Transverse colon (tissue), 4 donors: ENCODE measurements at regions of chr7 and their contacts with region 1.

Region 1: DNA sequence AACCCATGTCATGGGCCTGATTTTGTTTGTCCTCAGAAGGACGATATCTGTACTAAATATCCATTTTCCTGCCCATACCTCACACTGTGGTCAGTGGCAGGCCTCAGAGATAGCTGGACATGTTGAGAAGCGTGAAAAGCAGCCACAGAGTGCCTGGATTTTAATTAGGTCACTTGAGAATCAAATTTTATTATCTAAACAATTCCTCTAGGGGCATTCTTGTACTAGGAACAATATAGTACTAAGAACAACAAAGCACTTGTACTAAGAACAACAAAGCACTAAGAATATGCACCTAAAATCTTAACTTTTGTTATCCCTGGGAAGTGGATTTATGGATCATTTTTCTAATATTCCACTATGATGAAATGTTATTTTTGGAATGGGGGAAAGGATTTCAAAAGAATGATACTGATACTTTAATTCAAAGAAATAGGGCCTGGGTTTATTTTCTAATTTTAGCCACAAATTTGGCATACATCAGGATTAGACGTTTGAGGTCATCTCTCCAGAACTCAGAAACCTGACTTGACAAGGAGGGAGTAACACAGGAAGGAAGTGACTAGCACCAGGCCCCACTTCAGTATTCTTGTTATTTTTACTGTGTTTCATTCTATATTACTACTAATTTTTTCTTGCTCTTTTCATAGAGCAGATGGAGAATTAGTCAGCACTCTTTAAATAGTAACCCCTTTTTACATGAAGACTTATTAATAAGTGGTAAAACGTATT is 112.2 kb downstream of the EXOC4 start:
- DNase-seq: no peak
- H3K4me3 ChIP-seq: no peak overlapping the region
- H3K27ac ChIP-seq: peak overlapping the region in 1 of 4 donors; percentile 6
- H3K4me1 ChIP-seq: peaks cover 0 to 38% (median 4%) of the 10 kb centered on the region in 4 donors
- H3K27me3 ChIP-seq: no peaks in the 10 kb centered on the region
- CTCF ChIP-seq: no peak
- EP300 ChIP-seq: no peak
- POLR2A ChIP-seq: no peak

Region 2: DNA sequence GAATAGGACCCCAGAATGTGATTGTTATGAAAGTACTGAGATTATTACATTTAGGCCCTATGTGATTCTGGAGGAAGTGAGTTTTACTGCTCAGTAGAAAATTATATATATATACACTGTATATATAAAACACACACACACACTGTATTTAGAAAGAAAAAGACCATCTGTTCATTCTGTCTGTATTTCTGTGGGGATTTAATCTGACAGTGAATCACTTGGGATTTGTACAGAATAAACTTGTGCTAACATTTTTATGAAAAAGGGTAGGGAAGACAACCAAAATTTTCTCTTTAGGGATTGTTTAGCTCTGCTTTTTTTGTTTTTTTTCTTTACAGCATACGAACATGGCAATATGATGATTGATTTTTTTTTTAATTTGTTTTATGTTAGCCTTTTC is 30.4 kb after region 1 on chr7:
- in situ Hi-C with region 1: no loop called
- intact Hi-C with region 1: loop called (anchors 1 kb)
- DNase-seq: no peak
- H3K4me3 ChIP-seq: no peak overlapping the region
- H3K27ac ChIP-seq: no peak overlapping the region
- H3K4me1 ChIP-seq: peaks cover 0 to under 1% (median 0%) of the 10 kb centered on the region in 4 donors
- H3K27me3 ChIP-seq: no peaks in the 10 kb centered on the region
- CTCF ChIP-seq: no peak
- EP300 ChIP-seq: no peak
- POLR2A ChIP-seq: no peak

Region 3: GRCh38 chr7:133512560-133512959 is 147.4 kb after region 1 on chr7:
- in situ Hi-C with region 1: no loop called
- intact Hi-C with region 1: no loop called
- DNase-seq: no peak
- H3K4me3 ChIP-seq: no peak overlapping the region
- H3K27ac ChIP-seq: no peak overlapping the region
- H3K4me1 ChIP-seq: peaks cover 0 to 3% (median 0%) of the 10 kb centered on the region in 4 donors
- H3K27me3 ChIP-seq: no peaks in the 10 kb centered on the region
- CTCF ChIP-seq: no peak
- EP300 ChIP-seq: no peak
- POLR2A ChIP-seq: no peak